ENCODE measurements at regions of chr9 and their contacts with region 1.

Region 1: GRCh38 chr9:131656356-131657036 is 83.4 kb downstream of the RAPGEF1 start:
- DNase-seq: no peak
- ATAC-seq: no peak
- H3K4me3 ChIP-seq: no peak overlapping the region
- H3K27ac ChIP-seq: no peak overlapping the region
- H3K4me1 ChIP-seq: peaks cover 29% of the 10 kb centered on the region
- H3K27me3 ChIP-seq: no peaks in the 10 kb centered on the region
- CTCF ChIP-seq: no peak

Region 2: GRCh38 chr9:131678499-131679111 is 22.1 kb after region 1 on chr9:
- CTCF ChIA-PET with region 1: no interaction called
- POLR2A ChIA-PET with region 1: no interaction called
- intact Hi-C with region 1: loop called (anchors 1 kb)
- DNase-seq: peak; percentile 92
- ATAC-seq: peak; percentile 98
- H3K4me3 ChIP-seq: peak overlapping the region; percentile 31; the same call in 1 of the 2 replicates
- H3K27ac ChIP-seq: peak overlapping the region; percentile 75
- H3K4me1 ChIP-seq: peaks cover 39% of the 10 kb centered on the region
- H3K27me3 ChIP-seq: no peaks in the 10 kb centered on the region
- CTCF ChIP-seq: no peak

Region 3: GRCh38 chr9:131733541-131734061 is 77.1 kb after region 1 on chr9:
- CTCF ChIA-PET with region 1: no interaction called
- POLR2A ChIA-PET with region 1: no interaction called
- intact Hi-C with region 1: loop called (anchors 5 kb)
- DNase-seq: peak; percentile 94
- ATAC-seq: peak; percentile 88
- H3K4me3 ChIP-seq: peak overlapping the region; percentile 37; the same call in 1 of the 2 replicates
- H3K27ac ChIP-seq: peak overlapping the region; percentile 95
- H3K4me1 ChIP-seq: peaks cover 59% of the 10 kb centered on the region
- H3K27me3 ChIP-seq: no peaks in the 10 kb centered on the region
- CTCF ChIP-seq: no peak

Measured in PC-3 (cell line).